ENCODE measurements at regions of chr12 and their contacts with region 1.

Region 1: DNA sequence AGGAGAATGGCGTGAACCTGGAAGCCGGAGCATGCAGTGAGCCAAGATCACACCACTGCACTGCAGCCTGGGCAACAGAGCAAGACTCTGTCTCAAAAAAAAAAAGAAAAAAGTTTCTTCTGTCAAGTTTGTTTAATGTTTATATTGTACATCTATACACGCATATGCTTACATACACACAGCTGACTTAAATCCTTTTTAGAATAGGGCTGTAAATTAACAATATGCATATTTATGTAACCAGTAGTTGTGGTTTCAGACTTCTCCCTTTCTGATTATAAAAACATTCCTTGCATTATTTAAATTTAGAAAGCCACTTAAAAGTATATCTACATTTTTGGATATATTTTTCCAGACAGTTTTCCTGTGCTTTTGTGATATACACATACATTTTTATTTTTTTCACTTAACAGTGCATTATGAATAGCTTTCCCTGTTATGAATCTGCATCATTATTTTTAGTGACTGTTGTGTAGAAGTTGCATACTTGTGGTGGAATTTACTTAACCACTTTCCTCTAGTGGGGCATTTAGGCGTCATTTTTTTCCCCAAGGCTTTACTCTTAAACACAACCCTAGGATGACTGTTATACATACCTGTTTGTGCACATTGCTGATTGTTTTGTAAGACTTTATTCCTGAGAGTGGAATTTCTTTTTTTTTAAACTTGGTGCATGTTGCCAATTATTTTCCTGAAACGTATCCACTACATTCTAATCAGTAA is 29.4 kb downstream of the POLR3B start:
- DNase-seq: no peak
- ATAC-seq: no peak
- H3K4me3 ChIP-seq: no peak overlapping the region
- H3K27ac ChIP-seq: no peak overlapping the region
- H3K4me1 ChIP-seq: no peaks in the 10 kb centered on the region
- H3K27me3 ChIP-seq: no peaks in the 10 kb centered on the region

Region 2: DNA sequence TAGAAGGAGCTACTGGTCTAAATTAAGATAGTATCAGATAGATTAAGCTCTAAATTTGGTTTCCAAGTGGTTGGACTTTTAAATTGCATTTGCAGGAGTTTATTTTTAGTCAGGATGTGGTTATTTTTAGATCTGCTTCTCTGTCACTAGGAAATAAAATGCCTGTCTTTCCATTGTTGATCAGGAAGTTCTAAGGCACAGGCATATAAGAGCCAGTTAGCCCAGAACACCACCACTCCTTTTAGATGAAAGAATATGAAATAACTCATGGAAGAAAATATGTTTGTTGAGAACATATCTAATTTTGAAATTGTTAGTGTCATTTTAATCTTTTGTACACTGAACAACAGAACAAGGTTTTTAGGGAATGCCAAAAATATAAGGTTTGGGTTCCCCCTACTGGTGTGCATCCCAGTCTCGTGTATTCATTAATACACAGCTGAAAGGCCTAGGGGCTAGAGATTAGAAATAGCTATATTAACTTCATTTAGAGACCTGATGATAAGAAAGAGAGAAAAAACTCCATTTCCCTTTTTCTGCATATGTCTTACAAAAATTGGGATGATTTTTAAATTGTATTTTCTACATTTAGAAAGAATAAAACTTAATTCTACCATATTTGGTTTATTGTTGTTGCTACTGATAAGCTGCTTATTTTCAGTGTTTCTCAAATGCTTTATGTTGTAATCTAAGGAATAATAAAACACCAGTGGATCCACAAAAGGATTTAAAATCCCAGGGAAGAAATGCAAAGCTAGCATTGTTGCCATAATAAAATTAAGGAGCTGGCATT is 454.7 kb after region 1 on chr12:
- intact Hi-C with region 1: loop called (anchors 5 to 10 kb)
- DNase-seq: no peak
- ATAC-seq: peak; percentile 79 to 81
- H3K4me3 ChIP-seq: no peak overlapping the region
- H3K27ac ChIP-seq: no peak overlapping the region
- H3K4me1 ChIP-seq: peaks cover 2% of the 10 kb centered on the region
- H3K27me3 ChIP-seq: no peaks in the 10 kb centered on the region

Region 3: GRCh38 chr12:106919910-106920544 is 533.1 kb after region 1 on chr12:
- intact Hi-C with region 1: loop called (anchors 2 to 5 kb)
- DNase-seq: no peak
- ATAC-seq: no peak
- H3K4me3 ChIP-seq: no peak overlapping the region
- H3K27ac ChIP-seq: no peak overlapping the region
- H3K4me1 ChIP-seq: no peaks in the 10 kb centered on the region
- H3K27me3 ChIP-seq: no peaks in the 10 kb centered on the region

Measured in right cardiac atrium (tissue), 5 donors.